Endothelial cell of umbilical vein (primary cell): ENCODE measurements at regions of chr19 and their contacts with region 1.

Region 1: GRCh38 chr19:16062789-16063188 is 13.5 kb upstream of the TPM4 start:
- DNase-seq: peak; percentile 45
- H3K4me3 ChIP-seq: no peak overlapping the region
- H3K27ac ChIP-seq: no peak overlapping the region
- H3K4me1 ChIP-seq: peaks cover 21% of the 10 kb centered on the region
- H3K27me3 ChIP-seq: no peaks in the 10 kb centered on the region
- CTCF ChIP-seq: peak; percentile 85 to 87
- POLR2A ChIP-seq: no peak

Region 2: GRCh38 chr19:15479391-15480345 is 583.1 kb before region 1 on chr19 and contains the start of gene PGLYRP2:
- CTCF ChIA-PET with region 1: no interaction called
- POLR2A ChIA-PET with region 1: no interaction called
- dilution Hi-C with region 1: no loop called
- intact Hi-C with region 1: no loop called
- DNase-seq: no peak
- H3K4me3 ChIP-seq: no peak within 1 kb of the TSS
- H3K27ac ChIP-seq: no peak within 1 kb of the TSS
- H3K4me1 ChIP-seq: no peaks in the 10 kb centered on the region
- H3K27me3 ChIP-seq: no peaks in the 10 kb centered on the region
- CTCF ChIP-seq: peak in 1 of 2 donors; percentile 15
- POLR2A ChIP-seq: no peak
- total RNA-seq, gene PGLYRP2: 0.18 TPM in 1 of 2 replicates, not detected in the other

Region 3: GRCh38 chr19:16032509-16033135 is 30.2 kb before region 1 on chr19:
- CTCF ChIA-PET with region 1: no interaction called
- POLR2A ChIA-PET with region 1: no interaction called
- dilution Hi-C with region 1: no loop called
- intact Hi-C with region 1: no loop called
- DNase-seq: no peak
- H3K4me3 ChIP-seq: no peak overlapping the region
- H3K27ac ChIP-seq: no peak overlapping the region
- H3K4me1 ChIP-seq: no peaks in the 10 kb centered on the region
- H3K27me3 ChIP-seq: no peaks in the 10 kb centered on the region
- CTCF ChIP-seq: no peak
- POLR2A ChIP-seq: no peak

Region 4: GRCh38 chr19:16051254-16052025 is 11.3 kb before region 1 on chr19:
- CTCF ChIA-PET with region 1: interaction called, 84 read pairs
- POLR2A ChIA-PET with region 1: no interaction called
- dilution Hi-C with region 1: no loop called
- intact Hi-C with region 1: no loop called
- DNase-seq: peak; percentile 47
- H3K4me3 ChIP-seq: no peak overlapping the region
- H3K27ac ChIP-seq: no peak overlapping the region
- H3K4me1 ChIP-seq: no peaks in the 10 kb centered on the region
- H3K27me3 ChIP-seq: peaks cover 0 to 3% of the 10 kb centered on the region in 2 experiments
- CTCF ChIP-seq: peak in 1 of 2 donors; percentile 10
- POLR2A ChIP-seq: no peak

Region 5: DNA sequence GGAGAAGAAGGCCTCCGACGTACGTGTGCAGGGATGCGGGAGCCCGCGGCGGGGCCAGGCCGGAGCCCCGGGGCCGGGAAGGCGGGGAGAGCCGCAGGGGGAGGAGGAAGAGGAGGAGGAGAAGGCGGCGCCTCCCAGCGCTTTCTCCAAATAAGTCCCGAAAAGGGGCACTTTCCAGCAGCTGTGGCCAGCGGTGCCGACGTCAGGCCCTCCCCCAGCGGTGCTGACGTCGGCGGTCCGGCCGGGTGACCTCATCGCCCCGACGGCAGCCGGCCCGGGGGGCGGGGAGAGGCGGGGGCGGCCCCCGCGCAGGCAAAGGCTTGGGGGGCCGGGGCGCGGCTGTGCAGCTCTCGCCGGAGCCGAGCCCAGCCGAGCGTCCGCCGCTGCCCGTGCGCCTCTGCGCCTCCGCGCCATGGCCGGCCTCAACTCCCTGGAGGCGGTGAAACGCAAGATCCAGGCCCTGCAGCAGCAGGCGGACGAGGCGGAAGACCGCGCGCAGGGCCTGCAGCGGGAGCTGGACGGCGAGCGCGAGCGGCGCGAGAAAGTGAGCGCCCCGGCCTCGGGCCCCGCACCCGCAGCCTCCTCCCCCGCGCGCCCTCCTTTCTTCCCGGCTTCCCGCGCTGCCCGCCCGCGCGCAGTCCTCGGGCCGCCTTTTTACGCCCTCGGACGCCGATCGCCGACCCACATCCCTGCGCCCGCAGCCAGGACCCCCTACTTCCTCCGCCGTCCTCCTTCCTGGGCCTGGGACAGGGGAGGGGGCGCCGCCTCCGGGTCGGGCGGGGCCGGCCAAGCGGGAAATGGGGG is 13.6 kb after region 1 on chr19 and contains the start of gene TPM4:
- CTCF ChIA-PET with region 1: interaction called, 14 read pairs
- POLR2A ChIA-PET with region 1: interaction called, 24 read pairs
- dilution Hi-C with region 1: no loop called
- intact Hi-C with region 1: loop called (anchors 1 kb)
- DNase-seq: peak; percentile 90
- H3K4me3 ChIP-seq: peak within 1 kb of the TSS; percentile 64 to 96 (median 95)
- H3K27ac ChIP-seq: peak within 1 kb of the TSS; percentile 100
- H3K4me1 ChIP-seq: peaks cover 39% of the 10 kb centered on the region
- H3K27me3 ChIP-seq: no peaks in the 10 kb centered on the region
- CTCF ChIP-seq: no peak
- POLR2A ChIP-seq: peak; percentile 89
- total RNA-seq, gene TPM4: 875 and 924 TPM in 2 replicates

Region 6: DNA sequence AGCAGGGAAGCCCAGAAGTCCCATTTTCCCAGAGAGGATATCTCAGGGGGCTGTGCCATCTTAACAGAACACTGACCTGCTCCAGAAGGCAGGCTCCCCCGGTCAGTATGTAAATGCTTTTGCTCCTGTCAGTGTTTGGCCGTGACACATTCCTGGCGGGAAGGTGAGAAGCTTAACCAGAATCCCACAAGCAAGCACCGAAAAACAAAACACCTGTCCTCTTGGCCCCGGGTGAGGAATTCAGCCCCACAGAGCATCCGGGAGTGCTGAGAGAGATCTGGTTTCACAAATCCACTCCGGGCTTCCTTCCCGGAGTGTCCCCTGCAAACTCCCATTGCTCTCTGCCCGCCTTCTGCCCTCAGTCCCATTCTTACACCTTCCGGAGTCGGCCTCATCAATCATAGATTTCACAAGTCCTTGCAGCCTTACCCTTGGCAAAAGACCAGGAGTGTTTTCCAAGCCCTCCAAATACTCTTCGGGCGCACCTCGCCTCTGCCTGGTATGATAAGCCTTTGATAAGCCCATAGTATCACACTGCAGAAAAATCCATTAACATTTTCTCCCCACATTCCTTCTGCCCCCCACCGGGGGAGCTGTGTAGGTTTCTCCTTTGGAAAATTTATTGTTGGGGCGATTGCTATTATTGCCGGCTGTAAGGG is 25.7 kb after region 1 on chr19:
- CTCF ChIA-PET with region 1: interaction called, 15 read pairs
- POLR2A ChIA-PET with region 1: interaction called, 5 read pairs
- dilution Hi-C with region 1: no loop called
- intact Hi-C with region 1: no loop called
- DNase-seq: no peak
- H3K4me3 ChIP-seq: no peak overlapping the region
- H3K27ac ChIP-seq: no peak overlapping the region
- H3K4me1 ChIP-seq: peaks cover 31% of the 10 kb centered on the region
- H3K27me3 ChIP-seq: no peaks in the 10 kb centered on the region
- CTCF ChIP-seq: peak in 1 of 2 donors; percentile 11
- POLR2A ChIP-seq: no peak

Region 7: GRCh38 chr19:16111160-16111908 is 48.5 kb after region 1 on chr19 and contains the start of gene RAB8A:
- CTCF ChIA-PET with region 1: interaction called, 4 read pairs
- POLR2A ChIA-PET with region 1: interaction called, 4 read pairs
- dilution Hi-C with region 1: no loop called
- intact Hi-C with region 1: loop called (anchors 1 kb)
- DNase-seq: peak; percentile 100
- H3K4me3 ChIP-seq: peak within 1 kb of the TSS; percentile 75 to 96 (median 87)
- H3K27ac ChIP-seq: peak within 1 kb of the TSS; percentile 75
- H3K4me1 ChIP-seq: peaks cover 12% of the 10 kb centered on the region
- H3K27me3 ChIP-seq: no peaks in the 10 kb centered on the region
- CTCF ChIP-seq: peak; percentile 93 to 96
- POLR2A ChIP-seq: no peak
- total RNA-seq, gene RAB8A: 98.9 and 107 TPM in 2 replicates